ENCODE measurements at regions of chr1 and their contacts with region 1.

Region 1: DNA sequence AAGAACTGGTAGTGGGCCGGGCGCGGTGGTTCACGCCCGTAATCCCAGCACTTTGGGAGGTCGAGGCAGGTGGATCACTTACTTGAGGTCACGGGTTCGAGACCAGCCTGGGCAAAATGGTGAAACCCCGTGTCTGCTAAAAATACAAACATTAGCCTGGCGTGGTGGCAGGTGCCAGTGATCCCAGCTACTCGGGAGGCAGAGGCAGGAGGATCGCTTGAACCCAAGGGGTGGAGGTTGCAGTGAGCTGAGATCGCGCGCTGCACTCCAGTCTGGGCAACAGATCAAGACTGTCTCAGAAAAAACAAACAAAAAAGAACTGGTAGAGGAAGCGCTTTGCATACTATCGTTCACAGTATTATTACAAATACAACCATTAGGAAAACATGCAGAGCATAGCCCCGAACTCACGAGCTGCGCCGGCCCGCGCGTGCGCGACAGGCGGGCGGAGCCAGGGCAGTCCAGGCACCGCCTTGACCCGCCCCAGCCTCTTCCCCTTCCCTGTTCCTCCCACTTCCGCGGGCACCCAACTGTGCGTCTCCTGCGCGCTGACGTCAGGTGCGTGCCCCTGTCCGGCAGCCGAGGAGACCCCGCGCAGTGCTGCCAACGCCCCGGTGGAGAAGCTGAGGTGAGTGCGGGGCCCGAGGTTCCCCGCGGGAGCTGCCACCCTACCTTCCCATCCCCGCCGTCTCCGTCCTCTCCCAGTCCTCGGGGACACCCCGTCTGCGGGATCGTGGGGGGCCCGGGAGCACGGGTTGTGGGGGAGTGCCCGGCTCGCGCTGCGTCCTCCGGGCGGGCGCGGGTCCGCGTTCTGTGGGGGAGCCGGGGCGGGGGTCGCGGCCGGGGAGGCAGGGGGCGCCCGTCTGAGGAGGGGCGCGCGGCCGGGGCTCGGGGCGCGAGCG is at the start of gene CDC42:
- DNase-seq: peak; percentile 97 to 98 (median 98)
- H3K4me3 ChIP-seq: peak within 1 kb of the TSS; percentile 82 to 93
- H3K4me3 Mint-ChIP-seq: peak within 1 kb of the TSS; percentile 97 to 100 (median 99)
- H3K27ac ChIP-seq: peak within 1 kb of the TSS; percentile 98
- H3K27ac Mint-ChIP-seq: peak within 1 kb of the TSS; percentile 98 to 100 (median 100)
- H3K4me1 ChIP-seq: peaks cover 54% of the 10 kb centered on the region
- H3K4me1 Mint-ChIP-seq: peaks cover 34 to 75% (median 54%) of the 10 kb centered on the region in 4 donors
- H3K27me3 ChIP-seq: no peaks in the 10 kb centered on the region
- H3K27me3 Mint-ChIP-seq: no peaks in the 10 kb centered on the region
- total RNA-seq, gene CDC42: 195 to 202 TPM

Region 2: GRCh38 chr1:21782868-21783678 is 269.3 kb before region 1 on chr1 and contains the start of gene USP48:
- CTCF ChIA-PET with region 1: no interaction called
- POLR2A ChIA-PET with region 1: interaction called, 20 read pairs
- intact Hi-C with region 1: loop called (anchors 1 kb)
- DNase-seq: peak; percentile 97 to 98 (median 97)
- H3K4me3 ChIP-seq: peak within 1 kb of the TSS; percentile 47 to 97
- H3K4me3 Mint-ChIP-seq: peak within 1 kb of the TSS; percentile 92 to 99 (median 97)
- H3K27ac ChIP-seq: peak within 1 kb of the TSS; percentile 99
- H3K27ac Mint-ChIP-seq: peak within 1 kb of the TSS; percentile 100
- H3K4me1 ChIP-seq: peaks cover 37% of the 10 kb centered on the region
- H3K4me1 Mint-ChIP-seq: peaks cover 22 to 44% (median 33%) of the 10 kb centered on the region in 4 donors
- H3K27me3 ChIP-seq: no peaks in the 10 kb centered on the region
- H3K27me3 Mint-ChIP-seq: peaks cover 0 to 3% of the 10 kb centered on the region in 2 donors
- total RNA-seq, gene USP48: 110 to 117 TPM

Region 3: DNA sequence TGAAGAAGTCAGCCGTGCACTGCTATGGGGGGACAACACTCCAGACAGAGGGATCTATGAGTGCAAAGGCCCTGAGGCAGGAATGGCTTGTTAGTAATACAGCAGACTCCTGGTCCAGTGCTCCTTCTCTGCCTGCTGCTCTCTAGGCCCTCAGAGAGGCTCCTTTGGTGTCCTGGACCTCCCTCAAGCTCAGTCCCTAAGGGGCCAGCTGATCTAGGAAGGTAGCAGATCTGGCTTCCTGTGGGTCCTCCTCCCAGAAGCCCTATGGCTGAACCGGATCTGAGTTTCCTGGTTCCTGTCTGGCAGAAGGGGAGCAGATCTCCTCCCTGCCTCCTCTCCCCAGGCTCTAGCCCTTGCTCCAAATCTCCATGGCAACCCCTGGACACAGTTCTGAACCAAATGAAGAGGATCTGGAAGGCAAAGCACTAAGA is 240.5 kb before region 1 on chr1 and contains the start of gene LDLRAD2:
- CTCF ChIA-PET with region 1: no interaction called
- POLR2A ChIA-PET with region 1: no interaction called
- intact Hi-C with region 1: no loop called
- DNase-seq: no peak
- H3K4me3 ChIP-seq: no peak within 1 kb of the TSS
- H3K4me3 Mint-ChIP-seq: peak within 1 kb of the TSS in 2 of 8 donors; percentile 36 to 46
- H3K27ac ChIP-seq: no peak within 1 kb of the TSS
- H3K27ac Mint-ChIP-seq: no peak within 1 kb of the TSS
- H3K4me1 ChIP-seq: no peaks in the 10 kb centered on the region
- H3K4me1 Mint-ChIP-seq: peaks cover 0 to 4% (median 3%) of the 10 kb centered on the region in 4 donors
- H3K27me3 ChIP-seq: peaks cover 12% of the 10 kb centered on the region
- H3K27me3 Mint-ChIP-seq: peaks cover 16 to 21% of the 10 kb centered on the region in 2 donors
- total RNA-seq, gene LDLRAD2: not detected

Region 4: DNA sequence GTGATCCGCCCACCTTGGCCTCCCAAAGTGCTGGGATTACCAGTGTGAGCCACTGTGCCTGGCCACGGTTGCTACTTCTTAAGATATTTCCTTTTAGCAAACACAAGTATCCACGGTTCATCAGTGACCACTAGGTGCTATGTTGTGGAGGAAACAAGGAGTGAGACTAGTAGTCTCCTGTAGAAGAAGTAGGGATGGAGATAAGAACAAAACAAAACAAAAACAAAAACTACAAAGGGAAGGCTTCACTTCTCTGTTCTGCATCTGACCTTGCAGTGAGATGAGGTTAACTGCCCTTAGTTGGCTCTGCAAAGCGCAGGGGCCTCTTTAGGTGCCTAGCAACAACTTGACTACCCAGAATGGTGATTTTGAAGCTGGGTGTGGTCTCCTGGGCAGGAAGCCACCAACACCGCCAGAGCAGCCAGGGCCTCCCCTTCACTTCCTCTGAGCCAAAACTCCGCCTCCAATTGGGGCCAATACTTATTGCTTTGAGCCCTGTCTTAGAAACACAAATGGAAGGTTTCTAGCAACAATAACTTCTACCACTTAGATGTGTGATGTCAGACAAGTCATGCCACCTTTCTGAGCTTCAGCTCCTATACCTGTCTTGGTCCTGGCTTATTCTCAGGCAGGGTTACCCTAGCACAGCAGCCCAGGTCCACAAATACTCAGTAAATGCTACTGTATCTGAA is 12.6 kb before region 1 on chr1:
- CTCF ChIA-PET with region 1: interaction called, 79 read pairs
- POLR2A ChIA-PET with region 1: interaction called, 874 read pairs
- intact Hi-C with region 1: loop called (anchors 1 kb)
- DNase-seq: peak; percentile 93 to 99 (median 98)
- H3K4me3 ChIP-seq: peak overlapping the region; percentile 24 to 53
- H3K4me3 Mint-ChIP-seq: peak overlapping the region; percentile 78 to 89 (median 84)
- H3K27ac ChIP-seq: peak overlapping the region; percentile 86
- H3K27ac Mint-ChIP-seq: peak overlapping the region; percentile 94 to 100 (median 99)
- H3K4me1 ChIP-seq: peaks cover 75% of the 10 kb centered on the region
- H3K4me1 Mint-ChIP-seq: peaks cover 40 to 76% (median 54%) of the 10 kb centered on the region in 4 donors
- H3K27me3 ChIP-seq: no peaks in the 10 kb centered on the region
- H3K27me3 Mint-ChIP-seq: no peaks in the 10 kb centered on the region

Region 5: DNA sequence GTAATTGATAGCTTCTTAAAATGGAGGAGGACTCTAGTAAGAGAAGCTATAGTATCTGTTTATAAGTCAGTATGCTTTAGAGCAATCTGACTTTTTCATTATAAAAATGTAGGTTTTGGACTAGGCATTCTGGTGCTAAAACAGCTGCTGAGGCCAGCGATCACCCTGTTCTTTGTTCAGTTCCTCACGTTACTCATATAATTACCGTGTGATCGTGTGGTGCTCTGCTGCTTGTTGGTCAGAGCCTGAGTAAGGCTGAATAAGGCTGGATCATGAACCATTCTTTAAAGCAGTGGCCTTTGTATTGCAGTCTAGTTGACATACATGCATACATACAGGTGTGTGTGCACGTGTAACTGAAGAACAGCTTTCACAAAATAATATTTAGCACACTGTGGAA is 25.4 kb after region 1 on chr1:
- CTCF ChIA-PET with region 1: interaction called, 5 read pairs
- POLR2A ChIA-PET with region 1: interaction called, 19 read pairs
- intact Hi-C with region 1: no loop called
- DNase-seq: no peak
- H3K4me3 ChIP-seq: no peak overlapping the region
- H3K4me3 Mint-ChIP-seq: peak overlapping the region in 5 of 8 donors; percentile 36 to 76 (median 49)
- H3K27ac ChIP-seq: no peak overlapping the region
- H3K27ac Mint-ChIP-seq: peak overlapping the region in 5 of 7 donors; percentile 4 to 82 (median 57)
- H3K4me1 ChIP-seq: peaks cover 92% of the 10 kb centered on the region
- H3K4me1 Mint-ChIP-seq: peaks cover 63 to 96% (median 77%) of the 10 kb centered on the region in 4 donors
- H3K27me3 ChIP-seq: no peaks in the 10 kb centered on the region
- H3K27me3 Mint-ChIP-seq: no peaks in the 10 kb centered on the region

Region 6: GRCh38 chr1:22098752-22099151 is 46.4 kb after region 1 on chr1:
- CTCF ChIA-PET with region 1: interaction called, 5 read pairs
- POLR2A ChIA-PET with region 1: interaction called, 16 read pairs
- intact Hi-C with region 1: no loop called
- DNase-seq: no peak
- H3K4me3 ChIP-seq: no peak overlapping the region
- H3K4me3 Mint-ChIP-seq: no peak overlapping the region
- H3K27ac ChIP-seq: no peak overlapping the region
- H3K27ac Mint-ChIP-seq: peak overlapping the region in 5 of 7 donors; percentile 2 to 77 (median 63)
- H3K4me1 ChIP-seq: peaks cover 59% of the 10 kb centered on the region
- H3K4me1 Mint-ChIP-seq: peaks cover 45 to 81% (median 63%) of the 10 kb centered on the region in 4 donors
- H3K27me3 ChIP-seq: no peaks in the 10 kb centered on the region
- H3K27me3 Mint-ChIP-seq: no peaks in the 10 kb centered on the region

Region 7: DNA sequence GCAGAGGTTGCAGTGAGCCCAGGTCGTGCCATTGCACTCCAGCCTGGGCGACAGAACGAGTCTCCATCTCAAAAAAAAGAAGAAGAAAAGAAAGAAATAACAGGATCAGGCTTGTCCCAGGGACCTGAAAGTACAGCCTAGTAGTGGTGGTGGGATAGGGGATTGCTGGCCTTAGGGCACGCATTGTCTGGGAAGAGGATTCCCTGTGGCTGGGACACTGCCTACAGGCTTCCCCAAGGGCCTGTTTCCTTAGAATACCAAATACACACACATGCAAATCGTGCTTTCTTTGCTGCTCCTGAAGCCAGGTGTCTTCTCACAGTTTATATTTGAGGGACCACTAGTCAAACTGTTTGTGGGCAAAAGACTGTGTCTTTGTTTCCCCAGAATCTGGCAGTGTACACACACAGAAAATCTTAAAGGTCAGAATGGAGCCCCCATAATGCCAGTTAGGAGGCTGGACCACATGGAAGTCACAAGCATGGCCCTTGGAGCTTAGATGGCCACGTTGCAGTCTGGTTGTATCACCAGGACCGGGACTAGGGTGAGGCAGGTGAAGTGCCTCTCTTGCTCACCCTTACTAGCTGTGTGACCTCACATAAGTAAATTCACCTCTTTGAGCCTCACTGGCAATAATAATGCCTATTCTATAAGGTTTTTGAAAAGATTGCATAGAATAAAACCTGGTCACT is 1444.3 kb after region 1 on chr1:
- CTCF ChIA-PET with region 1: no interaction called
- POLR2A ChIA-PET with region 1: no interaction called
- intact Hi-C with region 1: no loop called
- DNase-seq: no peak
- H3K4me3 ChIP-seq: no peak overlapping the region
- H3K4me3 Mint-ChIP-seq: no peak overlapping the region
- H3K27ac ChIP-seq: no peak overlapping the region
- H3K27ac Mint-ChIP-seq: no peak overlapping the region
- H3K4me1 ChIP-seq: peaks cover 4% of the 10 kb centered on the region
- H3K4me1 Mint-ChIP-seq: peaks cover 0 to 9% (median 5%) of the 10 kb centered on the region in 4 donors
- H3K27me3 ChIP-seq: no peaks in the 10 kb centered on the region
- H3K27me3 Mint-ChIP-seq: no peaks in the 10 kb centered on the region

Measured in CD4-positive, alpha-beta memory T cell (primary cell).